ENCODE measurements at regions of chr1 and their contacts with region 1.

Region 1: GRCh38 chr1:143699731-143700130 is 272.1 kb downstream of the FAM72C start:
- DNase-seq: no peak
- ATAC-seq: no peak
- H3K4me3 ChIP-seq: no peak overlapping the region
- H3K27ac ChIP-seq: no peak overlapping the region
- H3K4me1 ChIP-seq: no peaks in the 10 kb centered on the region
- H3K27me3 ChIP-seq: peaks cover 0 to 2% of the 10 kb centered on the region in 2 experiments; a peak in 2 of 4 replicates
- CTCF ChIP-seq: no peak
- EP300 ChIP-seq: no peak
- POLR2A ChIP-seq: no peak
- RAD21 ChIP-seq: no peak

Region 2: DNA sequence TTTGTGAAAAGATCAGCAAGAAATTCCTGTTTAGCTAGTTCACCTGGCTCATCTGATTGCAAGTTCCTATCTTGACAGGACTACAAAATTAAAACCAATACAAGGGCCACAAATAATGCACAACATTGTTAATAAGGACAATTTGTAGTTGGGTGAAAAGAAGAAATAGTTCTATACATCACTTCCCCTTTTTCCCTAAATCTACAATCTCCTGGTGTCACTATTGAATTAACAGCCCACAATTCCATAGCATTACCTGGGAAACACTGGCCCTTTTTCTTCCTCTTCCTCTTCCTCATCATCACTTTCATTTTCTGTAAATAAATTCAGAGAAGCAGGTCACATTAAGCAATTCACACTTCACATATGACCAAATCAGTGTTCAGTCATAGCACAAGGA is 94.8 kb before region 1 on chr1:
- CTCF ChIA-PET with region 1: no interaction called
- POLR2A ChIA-PET with region 1: no interaction called
- RAD21 ChIA-PET with region 1: no interaction called
- SMC1A ChIA-PET with region 1: no interaction called
- in situ Hi-C with region 1: loop called (anchors 10 kb)
- intact Hi-C with region 1: no loop called
- DNase-seq: no peak
- ATAC-seq: no peak
- H3K4me3 ChIP-seq: no peak overlapping the region
- H3K27ac ChIP-seq: no peak overlapping the region
- H3K4me1 ChIP-seq: no peaks in the 10 kb centered on the region
- H3K27me3 ChIP-seq: no peaks in the 10 kb centered on the region
- CTCF ChIP-seq: no peak
- EP300 ChIP-seq: no peak
- POLR2A ChIP-seq: no peak
- RAD21 ChIP-seq: no peak

Region 3: DNA sequence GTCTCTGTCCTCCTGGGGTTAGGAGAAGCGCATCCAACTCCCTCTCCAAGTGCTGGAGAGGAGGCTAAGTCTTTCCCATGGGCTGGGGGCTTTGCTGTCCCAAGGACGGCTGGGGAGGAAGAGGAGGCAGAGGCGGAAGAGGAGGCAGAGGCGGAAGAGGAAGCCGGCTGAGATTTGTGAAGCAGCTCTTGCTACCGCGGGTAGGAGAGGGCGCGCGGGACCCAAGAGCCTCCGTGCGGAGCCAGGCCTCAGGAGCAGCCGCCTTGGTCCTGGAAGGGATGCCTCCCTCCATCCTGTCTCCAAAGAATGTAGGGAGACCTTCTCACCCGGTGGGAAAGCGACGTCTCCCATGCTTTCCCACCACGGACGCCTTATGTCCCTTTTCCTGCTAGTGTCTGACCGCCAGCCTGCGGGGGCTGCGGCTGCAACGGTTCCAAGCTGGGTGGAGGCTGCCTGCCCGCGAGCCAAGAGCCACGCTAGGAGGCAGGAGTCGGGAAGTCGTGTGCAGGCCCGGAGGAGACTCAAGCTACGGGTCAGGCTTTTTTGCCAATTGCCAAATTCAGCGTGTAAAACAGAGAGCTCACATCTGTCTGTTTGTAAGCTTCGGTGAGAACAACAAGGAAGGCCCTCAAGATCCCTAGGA is 48.3 kb before region 1 on chr1:
- CTCF ChIA-PET with region 1: no interaction called
- POLR2A ChIA-PET with region 1: no interaction called
- RAD21 ChIA-PET with region 1: no interaction called
- SMC1A ChIA-PET with region 1: no interaction called
- in situ Hi-C with region 1: loop called (anchors 10 kb)
- intact Hi-C with region 1: no loop called
- DNase-seq: no peak
- ATAC-seq: no peak
- H3K4me3 ChIP-seq: no peak overlapping the region
- H3K27ac ChIP-seq: no peak overlapping the region
- H3K4me1 ChIP-seq: no peaks in the 10 kb centered on the region
- H3K27me3 ChIP-seq: no peaks in the 10 kb centered on the region
- CTCF ChIP-seq: no peak
- EP300 ChIP-seq: no peak
- POLR2A ChIP-seq: no peak
- RAD21 ChIP-seq: no peak

Measured in GM12878 (cell line).